B cell (primary cell): ENCODE measurements at regions of chr14 and their contacts with region 1.

Region 1: GRCh38 chr14:61894452-61895077 is 132.3 kb downstream of the SNAPC1 start:
- DNase-seq: peak; percentile 70
- ATAC-seq: no peak
- H3K4me3 ChIP-seq: no peak overlapping the region
- H3K4me3 Mint-ChIP-seq: no peak overlapping the region
- H3K27ac ChIP-seq: no peak overlapping the region
- H3K27ac Mint-ChIP-seq: peak overlapping the region; percentile 18
- H3K4me1 ChIP-seq: peaks cover 24 to 36% of the 10 kb centered on the region in 2 donors
- H3K4me1 Mint-ChIP-seq: peaks cover 36% of the 10 kb centered on the region
- H3K27me3 ChIP-seq: no peaks in the 10 kb centered on the region
- H3K27me3 Mint-ChIP-seq: no peaks in the 10 kb centered on the region
- CTCF ChIP-seq: peak; percentile 86

Region 2: DNA sequence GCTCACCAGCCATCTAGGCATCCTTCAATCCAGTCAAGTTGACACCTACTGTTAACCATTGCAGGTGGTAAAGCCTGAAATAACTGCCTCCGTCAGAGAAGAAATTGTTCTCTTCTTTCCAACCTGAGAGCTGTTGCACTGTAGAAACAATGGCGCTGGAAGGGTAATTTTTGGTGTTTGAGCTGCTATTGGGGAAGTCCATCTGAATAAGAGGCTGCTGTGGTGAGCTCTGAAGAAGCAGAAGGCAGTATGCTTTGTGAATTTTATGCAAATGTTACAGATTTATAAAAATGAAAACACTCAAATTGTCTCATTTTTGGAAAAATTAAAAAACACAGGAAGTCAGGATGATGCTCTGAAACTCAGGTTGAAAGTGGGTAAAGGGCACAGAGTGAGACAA is 72.1 kb before region 1 on chr14:
- CTCF ChIA-PET with region 1: no interaction called
- POLR2A ChIA-PET with region 1: no interaction called
- intact Hi-C with region 1: no loop called
- DNase-seq: no peak
- ATAC-seq: no peak
- H3K4me3 ChIP-seq: no peak overlapping the region
- H3K4me3 Mint-ChIP-seq: no peak overlapping the region
- H3K27ac ChIP-seq: no peak overlapping the region
- H3K27ac Mint-ChIP-seq: no peak overlapping the region
- H3K4me1 ChIP-seq: no peaks in the 10 kb centered on the region
- H3K4me1 Mint-ChIP-seq: no peaks in the 10 kb centered on the region
- H3K27me3 ChIP-seq: peaks cover 0 to 6% (median 0%) of the 10 kb centered on the region in 4 experiments
- H3K27me3 Mint-ChIP-seq: peaks cover 24% of the 10 kb centered on the region
- CTCF ChIP-seq: no peak

Region 3: GRCh38 chr14:61860294-61860918 is 34.2 kb before region 1 on chr14:
- CTCF ChIA-PET with region 1: interaction called, 20 read pairs
- POLR2A ChIA-PET with region 1: no interaction called
- intact Hi-C with region 1: loop called (anchors 2 kb)
- DNase-seq: peak; percentile 80
- ATAC-seq: peak; percentile 100
- H3K4me3 ChIP-seq: no peak overlapping the region
- H3K4me3 Mint-ChIP-seq: no peak overlapping the region
- H3K27ac ChIP-seq: no peak overlapping the region
- H3K27ac Mint-ChIP-seq: no peak overlapping the region
- H3K4me1 ChIP-seq: peaks cover 4 to 7% of the 10 kb centered on the region in 2 donors
- H3K4me1 Mint-ChIP-seq: peaks cover 10% of the 10 kb centered on the region
- H3K27me3 ChIP-seq: peaks cover 0 to 3% (median 0%) of the 10 kb centered on the region in 4 experiments
- H3K27me3 Mint-ChIP-seq: peaks cover 14% of the 10 kb centered on the region
- CTCF ChIP-seq: peak; percentile 90

Region 4: GRCh38 chr14:61872452-61872851 is 22.1 kb before region 1 on chr14:
- CTCF ChIA-PET with region 1: interaction called, 7 read pairs
- POLR2A ChIA-PET with region 1: no interaction called
- intact Hi-C with region 1: loop called (anchors 2 kb)
- DNase-seq: peak; percentile 63
- ATAC-seq: peak; percentile 73
- H3K4me3 ChIP-seq: no peak overlapping the region
- H3K4me3 Mint-ChIP-seq: no peak overlapping the region
- H3K27ac ChIP-seq: no peak overlapping the region
- H3K27ac Mint-ChIP-seq: no peak overlapping the region
- H3K4me1 ChIP-seq: peaks cover 9 to 16% of the 10 kb centered on the region in 2 donors
- H3K4me1 Mint-ChIP-seq: peaks cover 21% of the 10 kb centered on the region
- H3K27me3 ChIP-seq: peaks cover 0 to 5% (median 2%) of the 10 kb centered on the region in 4 experiments
- H3K27me3 Mint-ChIP-seq: peaks cover 11% of the 10 kb centered on the region
- CTCF ChIP-seq: no peak

Region 5: GRCh38 chr14:62081012-62081612 is 186.5 kb after region 1 on chr14:
- CTCF ChIA-PET with region 1: interaction called, 6 read pairs
- POLR2A ChIA-PET with region 1: no interaction called
- intact Hi-C with region 1: loop called (anchors 5 kb)
- DNase-seq: peak; percentile 84
- ATAC-seq: peak; percentile 79
- H3K4me3 ChIP-seq: peak overlapping the region in 3 of 5 experiments; percentile 2 to 43 (median 25)
- H3K4me3 Mint-ChIP-seq: peak overlapping the region; percentile 58
- H3K27ac ChIP-seq: peak overlapping the region; percentile 82 to 94
- H3K27ac Mint-ChIP-seq: peak overlapping the region; percentile 88
- H3K4me1 ChIP-seq: peaks cover 74% of the 10 kb centered on the region in 2 donors
- H3K4me1 Mint-ChIP-seq: peaks cover 79% of the 10 kb centered on the region
- H3K27me3 ChIP-seq: no peaks in the 10 kb centered on the region
- H3K27me3 Mint-ChIP-seq: no peaks in the 10 kb centered on the region
- CTCF ChIP-seq: no peak